HAP-1 (cell line): ENCODE measurements at regions of chr1 and their contacts with region 1.

Region 1: DNA sequence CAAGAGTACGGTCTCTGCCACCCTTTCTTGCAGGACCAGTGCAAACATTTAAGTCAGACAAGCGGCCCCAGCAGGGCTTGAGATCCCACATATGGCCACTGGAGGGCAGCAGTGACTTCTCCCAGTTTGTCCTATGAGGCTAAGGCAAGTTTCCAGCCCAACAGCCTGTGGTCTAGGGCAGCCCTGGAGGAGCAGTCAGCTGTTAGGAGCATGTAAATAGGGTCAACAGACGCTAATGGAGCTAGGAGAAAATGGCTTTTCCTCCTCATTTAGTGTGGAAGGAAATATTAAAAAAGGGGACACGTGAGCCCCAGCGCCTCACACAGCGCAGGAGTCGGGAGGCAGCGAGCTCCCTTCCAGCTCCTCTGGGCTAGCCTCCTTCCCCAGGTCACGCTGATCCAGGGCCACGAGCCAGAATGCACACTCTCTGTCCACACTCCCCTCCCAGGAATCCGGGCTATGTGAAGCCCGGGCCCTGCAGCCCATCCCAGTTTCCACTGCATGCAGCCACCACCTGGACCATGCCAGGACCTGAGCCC is 95.6 kb downstream of the LAMC2 start:
- DNase-seq: peak; percentile 70 to 92
- H3K4me3 ChIP-seq: no peak overlapping the region
- H3K4me1 ChIP-seq: peaks cover 2% of the 10 kb centered on the region; the same call in 1 of the 2 replicates
- H3K27me3 ChIP-seq: no peaks in the 10 kb centered on the region

Region 2: GRCh38 chr1:182649041-182649440 is 632.6 kb before region 1 on chr1:
- in situ Hi-C with region 1: no loop called
- DNase-seq: no peak
- H3K4me3 ChIP-seq: no peak overlapping the region
- H3K4me1 ChIP-seq: no peaks in the 10 kb centered on the region
- H3K27me3 ChIP-seq: no peaks in the 10 kb centered on the region; the same call in 1 of the 2 replicates

Region 3: DNA sequence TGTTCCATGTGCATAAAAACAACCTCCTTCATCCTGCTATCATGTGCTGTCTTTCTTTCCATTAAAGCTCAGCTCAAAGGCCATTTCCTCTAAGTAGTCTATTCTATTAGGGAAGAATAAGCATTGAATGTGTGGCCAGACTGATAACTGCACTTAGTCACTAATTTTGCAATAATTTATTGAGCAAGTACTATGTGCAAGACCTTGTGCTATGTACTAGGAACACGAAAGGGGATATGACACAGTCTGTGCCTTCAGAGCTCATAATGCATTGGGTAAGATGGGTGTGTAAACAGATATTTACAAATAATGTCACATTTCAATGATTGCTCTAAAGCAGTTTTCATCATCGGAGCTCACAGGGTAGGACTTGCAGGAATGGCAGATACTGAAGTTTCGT is 82.3 kb after region 1 on chr1:
- in situ Hi-C with region 1: no loop called
- DNase-seq: no peak
- H3K4me3 ChIP-seq: no peak overlapping the region
- H3K4me1 ChIP-seq: no peaks in the 10 kb centered on the region; the same call in 1 of the 2 replicates
- H3K27me3 ChIP-seq: no peaks in the 10 kb centered on the region

Region 4: GRCh38 chr1:183622884-183623785 is 341.5 kb after region 1 on chr1:
- in situ Hi-C with region 1: loop called (anchors 5 kb)
- DNase-seq: peak; percentile 59 to 68
- H3K4me3 ChIP-seq: no peak overlapping the region
- H3K4me1 ChIP-seq: 0 out of 2 replicates have a peak, but pooled peaks cover 2% of the 10 kb centered on the region
- H3K27me3 ChIP-seq: no peaks in the 10 kb centered on the region

Region 5: GRCh38 chr1:183970516-183971300 is 689.1 kb after region 1 on chr1:
- in situ Hi-C with region 1: no loop called
- DNase-seq: no peak
- H3K4me3 ChIP-seq: no peak overlapping the region
- H3K4me1 ChIP-seq: no peaks in the 10 kb centered on the region
- H3K27me3 ChIP-seq: no peaks in the 10 kb centered on the region